ENCODE measurements at regions of chr11 and their contacts with region 1.

Region 1: GRCh38 chr11:94734563-94735275 is 33.4 kb upstream of the AMOTL1 start:
- DNase-seq: no peak
- H3K4me3 ChIP-seq: no peak overlapping the region
- H3K27ac ChIP-seq: no peak overlapping the region
- H3K4me1 ChIP-seq: no peaks in the 10 kb centered on the region
- H3K27me3 ChIP-seq: peaks cover 76% of the 10 kb centered on the region
- CTCF ChIP-seq: no peak
- EP300 ChIP-seq: no peak
- POLR2A ChIP-seq: no peak

Region 2: DNA sequence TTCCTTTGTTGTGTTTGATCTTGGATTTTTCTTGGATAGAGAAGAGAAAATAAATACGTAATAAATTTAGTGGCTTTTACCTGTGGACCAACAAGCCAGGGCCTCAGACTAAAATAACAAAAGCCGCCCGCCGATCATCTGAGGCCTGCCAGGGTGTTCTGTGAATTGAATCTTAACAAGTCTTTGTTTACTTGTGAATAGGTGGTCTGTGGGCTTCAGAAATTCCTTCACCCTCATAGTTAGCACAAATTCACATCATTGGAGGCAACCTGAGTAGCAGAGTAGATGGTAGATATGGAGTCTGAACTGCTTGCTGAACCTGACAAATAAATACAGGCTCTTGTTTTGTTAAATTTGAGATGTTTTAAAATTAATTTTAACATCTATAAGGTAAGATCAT is 1941.5 kb before region 1 on chr11:
- in situ Hi-C with region 1: no loop called
- intact Hi-C with region 1: no loop called
- DNase-seq: no peak
- H3K4me3 ChIP-seq: no peak overlapping the region
- H3K27ac ChIP-seq: no peak overlapping the region
- H3K4me1 ChIP-seq: no peaks in the 10 kb centered on the region
- H3K27me3 ChIP-seq: no peaks in the 10 kb centered on the region
- CTCF ChIP-seq: no peak
- EP300 ChIP-seq: no peak
- POLR2A ChIP-seq: no peak

Region 3: GRCh38 chr11:93524173-93524536 is 1210.6 kb before region 1 on chr11:
- in situ Hi-C with region 1: no loop called
- intact Hi-C with region 1: loop called (anchors 5 kb)
- DNase-seq: no peak
- H3K4me3 ChIP-seq: no peak overlapping the region
- H3K27ac ChIP-seq: peak overlapping the region in 2 of 4 donors; percentile 5 to 7
- H3K4me1 ChIP-seq: peaks cover 0 to 41% (median 10%) of the 10 kb centered on the region in 4 donors
- H3K27me3 ChIP-seq: no peaks in the 10 kb centered on the region
- CTCF ChIP-seq: no peak
- EP300 ChIP-seq: no peak
- POLR2A ChIP-seq: no peak

Region 4: GRCh38 chr11:94120946-94121345 is 613.8 kb before region 1 on chr11:
- in situ Hi-C with region 1: no loop called
- intact Hi-C with region 1: no loop called
- DNase-seq: no peak
- H3K4me3 ChIP-seq: no peak overlapping the region
- H3K27ac ChIP-seq: no peak overlapping the region
- H3K4me1 ChIP-seq: no peaks in the 10 kb centered on the region
- H3K27me3 ChIP-seq: no peaks in the 10 kb centered on the region
- CTCF ChIP-seq: no peak
- EP300 ChIP-seq: no peak
- POLR2A ChIP-seq: no peak

Region 5: DNA sequence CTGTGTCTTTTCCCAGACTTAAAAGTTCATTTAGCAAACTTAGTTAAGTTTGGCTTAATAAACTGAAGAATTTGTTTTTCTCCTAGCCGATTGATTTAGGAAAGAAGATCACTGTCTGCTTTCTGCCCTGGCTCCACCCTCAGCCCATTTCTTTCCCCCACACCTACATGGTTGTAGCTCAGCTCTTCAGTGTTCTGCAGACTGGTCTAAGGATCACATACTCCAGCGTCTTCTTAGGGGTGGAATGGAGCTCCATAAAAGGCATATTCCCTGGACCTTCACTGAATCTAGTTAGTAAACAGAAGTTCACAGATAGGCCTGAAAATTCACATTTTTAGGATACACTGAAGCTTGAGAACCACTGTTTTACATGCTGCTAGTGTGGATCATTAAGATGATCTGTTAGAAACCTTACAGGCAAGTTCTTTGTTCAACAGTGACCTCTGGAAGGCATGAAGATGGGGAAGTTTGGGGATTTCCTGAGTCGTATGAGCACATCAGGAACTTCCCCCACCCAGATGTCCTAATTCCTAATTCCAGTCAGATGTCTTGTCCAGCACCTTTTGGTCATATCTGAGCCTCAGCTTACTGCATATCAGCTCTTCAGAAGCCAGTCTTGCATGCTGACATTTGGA is 150.7 kb before region 1 on chr11:
- in situ Hi-C with region 1: no loop called
- intact Hi-C with region 1: no loop called
- DNase-seq: no peak
- H3K4me3 ChIP-seq: no peak overlapping the region
- H3K27ac ChIP-seq: no peak overlapping the region
- H3K4me1 ChIP-seq: no peaks in the 10 kb centered on the region
- H3K27me3 ChIP-seq: no peaks in the 10 kb centered on the region
- CTCF ChIP-seq: no peak
- EP300 ChIP-seq: no peak
- POLR2A ChIP-seq: no peak

Region 6: GRCh38 chr11:95556342-95557163 is 821.8 kb after region 1 on chr11:
- in situ Hi-C with region 1: no loop called
- intact Hi-C with region 1: no loop called
- DNase-seq: no peak
- H3K4me3 ChIP-seq: no peak overlapping the region
- H3K27ac ChIP-seq: peak overlapping the region in 1 of 4 donors; percentile 33
- H3K4me1 ChIP-seq: no peaks in the 10 kb centered on the region
- H3K27me3 ChIP-seq: no peaks in the 10 kb centered on the region
- CTCF ChIP-seq: no peak
- EP300 ChIP-seq: no peak
- POLR2A ChIP-seq: no peak

Measured in transverse colon (tissue), 4 donors.